H1 (cell line): ENCODE measurements at regions of chr2 and their contacts with region 1.

Region 1: DNA sequence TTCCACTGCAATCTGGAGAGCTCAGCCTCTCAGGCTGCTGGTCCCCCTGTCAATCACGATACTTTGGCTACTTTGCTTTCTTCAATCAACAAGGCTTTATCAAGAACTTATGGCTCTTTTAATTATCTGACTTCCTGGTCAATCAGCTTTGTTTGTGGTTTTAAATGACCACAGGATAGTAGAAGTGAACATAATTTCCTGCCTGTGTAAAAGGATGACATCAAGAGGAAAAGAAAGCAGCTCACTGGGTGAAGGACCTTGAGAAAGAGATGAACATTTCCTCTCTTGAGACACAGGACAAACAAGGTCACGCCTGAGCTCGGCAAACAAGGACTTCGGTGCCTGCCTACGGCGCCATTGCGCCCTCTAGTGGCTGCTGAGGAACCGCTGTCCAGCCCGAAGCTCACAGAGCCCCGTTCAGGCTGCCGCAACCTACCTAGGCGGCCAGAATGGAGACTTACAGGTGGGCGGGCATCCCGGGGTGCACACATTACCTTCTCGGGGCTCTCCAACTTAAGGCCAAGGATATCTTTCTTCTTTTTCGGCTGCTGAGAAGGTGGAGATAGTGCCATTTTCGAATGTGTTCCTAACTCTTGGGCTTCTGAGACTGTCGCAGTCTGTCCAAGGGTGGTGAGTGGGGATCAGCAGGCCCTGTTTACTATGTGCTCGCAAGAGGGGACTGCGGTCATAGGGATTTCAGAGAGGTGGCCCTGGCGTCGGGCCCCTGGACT is 54.0 kb downstream of the IL1RL2 start:
- DNase-seq: peak; percentile 84 to 93
- H3K4me3 ChIP-seq: no peak overlapping the region
- H3K27ac ChIP-seq: no peak overlapping the region
- H3K4me1 ChIP-seq: no peaks in the 10 kb centered on the region
- H3K27me3 ChIP-seq: no peaks in the 10 kb centered on the region
- CTCF ChIP-seq: peak; percentile 94 to 97 (median 97)
- EP300 ChIP-seq: 0 out of 3 replicates have a peak, but pooled peaks of 1 of the 2 experiments have one; percentile 30
- POLR2A ChIP-seq: no peak
- RAD21 ChIP-seq: peak; percentile 90

Region 2: DNA sequence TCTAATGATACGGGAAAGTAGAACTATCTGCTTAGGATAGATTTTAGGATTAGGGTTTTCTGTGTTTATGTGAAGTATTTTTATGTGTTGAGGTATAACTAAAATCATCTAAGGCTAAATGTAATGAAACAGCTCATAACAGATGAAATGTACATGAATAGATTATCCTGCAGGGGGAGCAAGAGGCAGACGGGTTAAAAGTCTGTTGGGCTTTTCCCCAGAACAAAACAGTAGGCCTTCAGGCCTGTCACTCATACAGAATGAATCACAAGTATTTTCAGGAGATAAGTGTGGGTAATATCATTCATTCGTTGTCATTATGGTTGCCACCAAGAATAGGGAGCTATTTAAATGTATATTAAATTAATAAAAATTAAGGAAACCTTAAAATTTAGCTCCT is 356.9 kb before region 1 on chr2:
- CTCF ChIA-PET with region 1: interaction called, 10 read pairs
- POLR2A ChIA-PET with region 1: no interaction called
- DNase-seq: no peak
- H3K4me3 ChIP-seq: no peak overlapping the region
- H3K27ac ChIP-seq: no peak overlapping the region
- H3K4me1 ChIP-seq: no peaks in the 10 kb centered on the region
- H3K27me3 ChIP-seq: no peaks in the 10 kb centered on the region
- CTCF ChIP-seq: peak in 2 of 3 experiments; percentile 44 to 57; a peak in 2 of 4 replicates
- EP300 ChIP-seq: no peak
- POLR2A ChIP-seq: no peak
- RAD21 ChIP-seq: peak; percentile 61 to 63

Region 3: GRCh38 chr2:102187496-102188150 is 53.2 kb before region 1 on chr2:
- CTCF ChIA-PET with region 1: interaction called, 25 read pairs
- POLR2A ChIA-PET with region 1: no interaction called
- DNase-seq: no peak
- H3K4me3 ChIP-seq: peak overlapping the region in 2 of 4 experiments; percentile 42 to 44; a peak in 3 of 8 replicates
- H3K27ac ChIP-seq: no peak overlapping the region
- H3K4me1 ChIP-seq: no peaks in the 10 kb centered on the region
- H3K27me3 ChIP-seq: peaks cover 1 to 18% (median 15%) of the 10 kb centered on the region in 4 experiments
- CTCF ChIP-seq: no peak
- EP300 ChIP-seq: no peak
- POLR2A ChIP-seq: no peak
- RAD21 ChIP-seq: no peak

Region 4: DNA sequence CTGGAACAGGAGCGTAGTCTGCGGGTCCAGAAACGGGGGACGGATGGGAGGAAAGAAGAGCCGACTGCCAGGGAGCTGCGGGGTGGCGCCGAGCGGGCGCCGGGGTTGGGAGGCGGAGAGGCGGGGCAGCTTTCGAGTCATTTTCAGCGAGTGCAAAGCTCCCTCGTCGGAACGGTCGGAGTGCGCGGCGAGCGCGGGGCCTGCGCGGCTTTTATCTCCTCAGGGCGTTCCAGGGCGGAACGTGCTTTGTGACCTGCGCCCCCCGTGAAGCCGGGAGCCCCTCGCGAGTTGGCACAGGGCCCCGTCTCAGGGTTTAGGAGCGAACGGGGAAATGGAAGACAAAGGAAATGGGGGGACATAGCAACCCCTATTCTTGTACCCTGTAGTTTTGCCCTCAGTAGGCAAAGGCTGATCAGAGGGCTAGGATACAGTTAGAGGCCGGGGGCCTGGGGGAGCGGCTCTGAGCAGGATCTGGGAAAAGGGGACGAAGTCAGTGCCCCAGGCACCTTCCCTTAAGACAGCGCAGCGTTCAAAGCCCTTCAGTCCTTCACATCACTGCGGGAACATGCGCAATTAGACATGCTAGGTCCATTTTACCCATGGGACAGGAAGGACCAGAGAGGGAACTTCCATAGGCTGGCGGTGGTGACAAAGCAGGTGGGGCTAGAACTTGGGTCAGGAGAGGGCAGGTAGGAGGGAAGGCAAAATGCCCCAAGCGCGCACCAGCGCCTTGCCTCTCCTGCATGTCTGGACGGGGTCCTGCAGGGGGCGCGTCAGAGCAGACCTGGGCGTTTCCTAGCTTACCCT is 10.4 kb after region 1 on chr2:
- CTCF ChIA-PET with region 1: interaction called, 10 read pairs
- POLR2A ChIA-PET with region 1: interaction called, 3 read pairs
- DNase-seq: peak in 1 of 2 experiments; percentile 82
- H3K4me3 ChIP-seq: peak overlapping the region; percentile 34 to 65 (median 45)
- H3K27ac ChIP-seq: no peak overlapping the region
- H3K4me1 ChIP-seq: peaks cover 0 to 4% (median under 1%) of the 10 kb centered on the region in 4 experiments; a peak in 2 of 7 replicates
- H3K27me3 ChIP-seq: peaks cover 0 to 18% (median 15%) of the 10 kb centered on the region in 4 experiments; a peak in 6 of 7 replicates
- CTCF ChIP-seq: peak; percentile 55 to 73 (median 71)
- EP300 ChIP-seq: no peak
- POLR2A ChIP-seq: no peak
- RAD21 ChIP-seq: peak; percentile 38 to 51; a peak in 3 of 4 replicates

Region 5: GRCh38 chr2:102331311-102331980 is 90.6 kb after region 1 on chr2:
- CTCF ChIA-PET with region 1: no interaction called
- POLR2A ChIA-PET with region 1: no interaction called
- DNase-seq: no peak
- H3K4me3 ChIP-seq: no peak overlapping the region
- H3K27ac ChIP-seq: no peak overlapping the region
- H3K4me1 ChIP-seq: no peaks in the 10 kb centered on the region
- H3K27me3 ChIP-seq: peaks cover 0 to 1% (median 0%) of the 10 kb centered on the region in 4 experiments; a peak in 1 of 7 replicates
- CTCF ChIP-seq: no peak
- EP300 ChIP-seq: no peak
- POLR2A ChIP-seq: no peak
- RAD21 ChIP-seq: no peak

Region 6: DNA sequence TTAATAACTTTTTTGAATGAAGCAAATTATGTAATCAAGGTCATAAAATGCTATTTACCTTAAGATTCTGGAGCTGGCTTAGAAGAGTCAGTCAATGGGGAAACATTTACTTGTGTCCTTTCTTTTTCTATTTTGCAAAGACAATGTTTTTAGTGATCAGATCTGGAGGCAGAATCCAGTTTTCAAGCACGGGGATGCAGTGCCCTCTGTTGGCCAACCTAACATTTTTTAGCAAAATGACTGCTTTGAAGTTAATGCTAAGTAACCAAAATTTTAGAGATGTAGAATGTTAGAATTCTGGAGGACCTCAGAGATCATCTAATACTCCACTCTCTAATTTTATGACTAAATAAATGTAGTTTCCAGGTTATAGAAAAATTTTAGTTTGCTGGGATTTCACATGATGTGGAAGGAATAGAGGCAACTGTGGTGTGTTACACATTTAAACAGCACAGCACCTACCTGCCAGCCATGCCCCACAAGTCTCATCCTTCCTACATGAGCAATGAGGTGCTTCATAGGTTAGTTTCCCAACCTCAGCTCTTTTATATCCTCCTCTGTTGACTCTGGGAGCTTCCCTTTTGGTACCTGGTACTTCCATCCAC is 208.7 kb after region 1 on chr2:
- CTCF ChIA-PET with region 1: interaction called, 24 read pairs
- POLR2A ChIA-PET with region 1: no interaction called
- DNase-seq: peak in 1 of 2 experiments; percentile 62
- H3K4me3 ChIP-seq: no peak overlapping the region
- H3K27ac ChIP-seq: no peak overlapping the region
- H3K4me1 ChIP-seq: no peaks in the 10 kb centered on the region
- H3K27me3 ChIP-seq: no peaks in the 10 kb centered on the region
- CTCF ChIP-seq: peak in 2 of 3 experiments; percentile 54 to 59; a peak in 3 of 4 replicates
- EP300 ChIP-seq: no peak
- POLR2A ChIP-seq: no peak
- RAD21 ChIP-seq: peak; percentile 83